ENCODE measurements at regions of chr3 and their contacts with region 1.

Region 1: GRCh38 chr3:194472290-194472920 is 14.4 kb downstream of the ATP13A3 start:
- DNase-seq: no peak
- ATAC-seq: peak; percentile 93
- H3K4me3 Mint-ChIP-seq: no peak overlapping the region
- H3K27ac Mint-ChIP-seq: no peak overlapping the region
- H3K4me1 Mint-ChIP-seq: peaks cover 25% of the 10 kb centered on the region
- H3K27me3 Mint-ChIP-seq: no peaks in the 10 kb centered on the region

Region 2: GRCh38 chr3:194458131-194458530 is 14.3 kb before region 1 on chr3:
- CTCF ChIA-PET with region 1: interaction called, 12 read pairs
- DNase-seq: no peak
- ATAC-seq: no peak
- H3K4me3 Mint-ChIP-seq: no peak overlapping the region
- H3K27ac Mint-ChIP-seq: no peak overlapping the region
- H3K4me1 Mint-ChIP-seq: no peaks in the 10 kb centered on the region
- H3K27me3 Mint-ChIP-seq: no peaks in the 10 kb centered on the region

Region 3: GRCh38 chr3:194486540-194487288 is 14.3 kb after region 1 on chr3 and contains the start of gene ATP13A3:
- CTCF ChIA-PET with region 1: interaction called, 33 read pairs
- DNase-seq: peak; percentile 90
- ATAC-seq: peak; percentile 85
- H3K4me3 Mint-ChIP-seq: peak within 1 kb of the TSS; percentile 92
- H3K27ac Mint-ChIP-seq: peak within 1 kb of the TSS; percentile 92
- H3K4me1 Mint-ChIP-seq: peaks cover 52% of the 10 kb centered on the region
- H3K27me3 Mint-ChIP-seq: no peaks in the 10 kb centered on the region
- total RNA-seq, gene ATP13A3: 78.3 to 82.0 TPM

Region 4: DNA sequence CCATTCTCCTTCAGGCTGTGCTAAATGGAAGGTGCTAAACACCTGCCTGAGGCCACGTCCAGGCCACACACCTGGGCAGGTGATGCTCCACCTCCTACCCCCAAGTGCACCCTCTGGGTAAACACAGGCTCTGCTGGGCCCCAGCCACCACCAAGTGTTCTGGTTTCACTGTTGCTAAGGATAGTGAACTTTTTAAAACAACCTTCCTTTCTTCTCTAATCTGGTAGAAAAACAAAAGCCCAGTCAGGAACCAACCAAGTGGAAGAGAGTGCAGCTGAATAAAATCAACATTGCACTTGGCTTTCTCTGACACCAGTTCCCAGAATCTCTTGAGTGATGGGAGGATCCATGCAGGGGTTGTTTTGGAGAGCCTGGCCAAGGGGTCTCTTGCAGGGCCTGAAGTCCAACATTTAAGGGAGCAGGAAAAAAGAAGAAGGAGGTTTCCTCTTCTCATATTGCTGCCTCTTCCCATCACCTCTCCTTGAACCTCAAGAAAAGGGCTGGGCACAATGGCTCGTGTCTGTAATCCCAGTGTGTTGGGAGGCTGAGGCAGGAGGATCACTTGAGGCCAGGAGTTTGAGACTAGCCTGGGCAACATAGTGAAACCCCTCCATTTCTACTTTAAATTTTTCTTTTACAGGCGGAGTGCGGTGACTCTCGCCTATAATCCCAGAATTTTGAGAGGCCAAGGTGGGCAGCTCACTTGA is 40.6 kb after region 1 on chr3:
- CTCF ChIA-PET with region 1: no interaction called
- DNase-seq: no peak
- ATAC-seq: no peak
- H3K4me3 Mint-ChIP-seq: no peak overlapping the region
- H3K27ac Mint-ChIP-seq: no peak overlapping the region
- H3K4me1 Mint-ChIP-seq: peaks cover 2% of the 10 kb centered on the region
- H3K27me3 Mint-ChIP-seq: no peaks in the 10 kb centered on the region

Region 5: DNA sequence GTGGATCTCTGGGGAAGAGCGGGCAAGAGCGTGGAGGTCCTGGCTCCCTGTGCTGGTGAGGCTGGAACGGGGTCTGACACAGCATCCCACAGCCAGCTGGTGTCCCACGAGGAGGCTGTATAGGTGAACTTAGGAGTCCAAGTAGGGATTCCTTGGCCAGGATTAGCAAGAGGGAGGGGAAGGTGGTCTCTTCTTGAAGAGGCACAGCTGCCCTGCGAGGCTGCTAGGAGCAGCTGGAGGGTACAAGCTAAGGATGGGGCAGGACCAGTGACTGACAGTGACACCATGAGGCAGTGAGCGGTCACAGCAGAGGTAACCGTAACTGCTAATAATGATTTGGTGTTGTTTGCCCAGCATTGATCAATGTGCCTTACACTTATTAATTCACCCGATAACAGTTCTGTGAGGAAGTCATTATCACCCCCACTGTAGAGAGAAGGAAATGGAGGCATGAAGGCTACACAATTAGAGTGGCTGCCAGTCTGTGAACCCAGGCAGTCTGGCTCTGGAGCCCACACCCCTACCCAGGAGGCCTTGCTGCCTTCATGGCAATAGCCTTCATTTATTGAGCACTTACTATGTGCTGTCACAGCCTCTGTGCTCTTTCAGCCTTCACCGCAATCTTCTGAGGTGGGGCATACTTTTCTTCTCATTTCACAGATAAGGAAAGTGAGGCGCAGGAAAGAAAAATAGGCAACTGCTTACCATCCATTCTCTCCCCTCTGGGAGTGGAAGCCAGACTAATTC is 101.5 kb after region 1 on chr3:
- CTCF ChIA-PET with region 1: interaction called, 29 read pairs
- DNase-seq: peak; percentile 54
- ATAC-seq: peak; percentile 85
- H3K4me3 Mint-ChIP-seq: no peak overlapping the region
- H3K27ac Mint-ChIP-seq: no peak overlapping the region
- H3K4me1 Mint-ChIP-seq: peaks cover 8% of the 10 kb centered on the region
- H3K27me3 Mint-ChIP-seq: peaks cover 30% of the 10 kb centered on the region

Region 6: GRCh38 chr3:194592798-194593752 is 120.7 kb after region 1 on chr3:
- CTCF ChIA-PET with region 1: interaction called, 16 read pairs
- DNase-seq: no peak
- ATAC-seq: no peak
- H3K4me3 Mint-ChIP-seq: no peak overlapping the region
- H3K27ac Mint-ChIP-seq: no peak overlapping the region
- H3K4me1 Mint-ChIP-seq: peaks cover 5% of the 10 kb centered on the region
- H3K27me3 Mint-ChIP-seq: no peaks in the 10 kb centered on the region